ENCODE measurements at regions of chr4 and their contacts with region 1.

Region 1: DNA sequence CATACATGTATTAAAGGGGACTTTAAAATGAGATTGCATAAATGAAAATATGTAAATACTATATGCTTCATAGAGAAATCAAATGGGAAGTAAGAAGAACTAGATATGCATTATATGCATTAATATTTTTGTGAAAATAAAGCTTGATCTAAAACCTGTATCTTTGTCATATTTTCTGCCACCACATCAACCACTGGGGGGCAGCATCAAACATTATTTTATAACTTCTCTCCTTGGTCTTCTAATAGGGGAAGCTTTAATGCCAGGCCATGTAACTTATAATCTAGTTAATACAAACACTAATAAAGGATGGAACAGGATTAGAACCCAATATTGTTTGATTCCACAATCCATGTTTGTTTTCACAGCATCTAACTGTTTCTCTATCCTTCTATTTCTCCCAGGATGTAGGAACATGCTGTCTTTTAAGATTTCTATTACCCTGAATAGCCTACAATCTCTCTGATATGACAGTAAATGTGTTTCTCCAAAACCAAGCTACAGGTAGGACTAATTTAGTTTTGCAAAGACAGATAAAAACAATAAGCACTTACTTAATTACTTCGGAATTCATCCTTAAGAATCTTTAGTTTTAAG is 10.0 kb downstream of the QRFPR start:
- DNase-seq: peak; percentile 72
- ATAC-seq: peak; percentile 62

Region 2: GRCh38 chr4:121277624-121278023 is 93.2 kb before region 1 on chr4:
- intact Hi-C with region 1: no loop called
- DNase-seq: no peak
- ATAC-seq: no peak

Region 3: DNA sequence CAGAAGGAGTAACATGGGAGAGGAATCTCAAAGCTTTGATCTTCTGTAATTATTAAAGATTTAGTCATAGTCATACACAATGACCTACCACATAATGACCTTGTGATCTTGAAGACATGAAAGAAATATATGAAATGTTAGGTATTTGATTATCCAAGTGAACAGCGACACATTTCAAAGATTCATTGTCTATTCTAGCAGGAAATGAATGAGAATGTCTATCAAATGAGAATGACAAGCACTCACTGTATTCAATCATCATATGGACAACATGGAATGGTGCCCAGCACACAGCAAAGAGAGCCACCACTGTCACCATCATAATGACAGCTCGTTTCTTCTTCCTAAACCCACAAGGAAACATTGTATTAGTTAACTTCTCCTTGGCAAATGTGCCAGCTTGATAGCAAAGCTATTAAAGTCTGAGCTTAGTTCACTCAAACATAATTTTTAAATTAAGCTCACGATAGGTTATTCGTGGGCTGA is 40.6 kb before region 1 on chr4:
- intact Hi-C with region 1: no loop called
- DNase-seq: no peak
- ATAC-seq: no peak

Region 4: DNA sequence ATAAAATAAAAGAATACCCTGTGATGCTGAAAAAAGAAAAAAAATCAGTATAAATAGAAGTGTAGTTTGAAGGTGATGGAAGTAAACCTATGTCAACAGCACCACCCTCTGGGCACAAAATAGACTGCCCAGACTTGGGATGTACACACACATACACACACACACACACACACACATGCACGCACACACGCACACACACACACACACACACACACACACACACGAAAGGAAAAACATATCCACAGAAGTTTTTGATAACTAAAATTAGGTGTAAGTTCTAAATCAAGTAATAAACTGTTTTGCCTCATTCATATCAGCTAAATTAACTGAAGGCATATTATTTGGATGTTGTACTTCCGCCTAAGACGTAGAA is 285.4 kb after region 1 on chr4:
- intact Hi-C with region 1: loop called (anchors 10 kb)
- DNase-seq: peak; percentile 62
- ATAC-seq: peak; percentile 92

Region 5: GRCh38 chr4:121726642-121727268 is 355.9 kb after region 1 on chr4:
- intact Hi-C with region 1: loop called (anchors 10 kb)
- DNase-seq: no peak
- ATAC-seq: peak; percentile 85